MCF 10A (cell line): ENCODE measurements at regions of chr11 and their contacts with region 1.

Region 1: GRCh38 chr11:12087075-12088004 is 23.1 kb upstream of the MICAL2 start:
- DNase-seq: peak; percentile 70
- H3K4me3 Mint-ChIP-seq: peak overlapping the region; percentile 8
- H3K27ac Mint-ChIP-seq: peak overlapping the region; percentile 37
- H3K4me1 Mint-ChIP-seq: peaks cover 45% of the 10 kb centered on the region
- H3K27me3 Mint-ChIP-seq: no peaks in the 10 kb centered on the region
- CTCF ChIP-seq: peak; percentile 11

Region 2: DNA sequence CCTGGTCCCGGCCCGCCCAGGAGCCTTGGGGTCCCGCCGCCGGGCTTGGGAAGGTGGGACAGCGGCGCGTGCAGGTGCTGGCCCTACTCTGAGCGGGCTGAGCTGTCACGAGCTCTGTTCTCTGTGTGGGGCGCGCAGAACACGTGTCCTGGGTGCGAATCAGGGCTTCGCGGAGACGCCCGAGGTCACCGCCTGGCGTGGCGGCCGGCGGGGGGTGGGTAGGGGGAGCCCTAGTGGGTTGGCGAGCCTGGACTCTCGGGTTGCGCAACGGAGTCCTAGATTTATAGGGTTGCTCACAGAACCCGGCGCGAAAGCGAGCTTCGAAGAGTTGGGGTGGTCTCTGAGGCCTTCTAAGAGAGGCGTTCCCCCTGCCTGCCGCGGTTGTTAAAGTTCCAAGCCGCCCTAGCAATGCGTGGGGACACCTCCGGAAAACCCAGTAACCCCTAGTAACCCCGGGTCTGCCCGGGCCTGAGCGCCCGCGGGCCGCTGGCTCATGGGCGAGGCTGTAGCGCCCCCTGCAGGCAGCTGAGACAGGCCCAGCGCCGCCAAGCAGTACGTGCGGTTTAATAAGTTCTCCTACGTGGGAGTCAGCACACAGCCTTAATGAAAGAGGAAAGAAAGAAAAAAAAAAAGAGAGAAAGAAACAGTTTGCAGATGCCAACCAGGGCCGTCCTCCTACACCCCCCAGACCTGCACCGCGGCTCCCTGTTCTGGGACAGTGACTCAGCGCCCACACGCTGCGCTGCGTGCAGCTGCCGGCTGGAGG is 1779.7 kb before region 1 on chr11:
- CTCF ChIA-PET with region 1: no interaction called
- POLR2A ChIA-PET with region 1: no interaction called
- intact Hi-C with region 1: no loop called
- DNase-seq: peak; percentile 87
- H3K4me3 Mint-ChIP-seq: peak overlapping the region; percentile 79
- H3K27ac Mint-ChIP-seq: peak overlapping the region; percentile 87
- H3K4me1 Mint-ChIP-seq: peaks cover 45% of the 10 kb centered on the region
- H3K27me3 Mint-ChIP-seq: no peaks in the 10 kb centered on the region
- CTCF ChIP-seq: peak; percentile 99

Region 3: GRCh38 chr11:12019337-12019736 is 68.0 kb before region 1 on chr11:
- CTCF ChIA-PET with region 1: no interaction called
- POLR2A ChIA-PET with region 1: no interaction called
- intact Hi-C with region 1: no loop called
- DNase-seq: no peak
- H3K4me3 Mint-ChIP-seq: no peak overlapping the region
- H3K27ac Mint-ChIP-seq: no peak overlapping the region
- H3K4me1 Mint-ChIP-seq: peaks cover 14% of the 10 kb centered on the region
- H3K27me3 Mint-ChIP-seq: no peaks in the 10 kb centered on the region
- CTCF ChIP-seq: no peak

Region 4: GRCh38 chr11:12052676-12053605 is 34.4 kb before region 1 on chr11:
- CTCF ChIA-PET with region 1: interaction called, 61 read pairs
- POLR2A ChIA-PET with region 1: interaction called, 3 read pairs
- intact Hi-C with region 1: loop called (anchors 5 kb)
- DNase-seq: peak; percentile 60
- H3K4me3 Mint-ChIP-seq: no peak overlapping the region
- H3K27ac Mint-ChIP-seq: peak overlapping the region; percentile 10
- H3K4me1 Mint-ChIP-seq: peaks cover 30% of the 10 kb centered on the region
- H3K27me3 Mint-ChIP-seq: no peaks in the 10 kb centered on the region
- CTCF ChIP-seq: no peak

Region 5: DNA sequence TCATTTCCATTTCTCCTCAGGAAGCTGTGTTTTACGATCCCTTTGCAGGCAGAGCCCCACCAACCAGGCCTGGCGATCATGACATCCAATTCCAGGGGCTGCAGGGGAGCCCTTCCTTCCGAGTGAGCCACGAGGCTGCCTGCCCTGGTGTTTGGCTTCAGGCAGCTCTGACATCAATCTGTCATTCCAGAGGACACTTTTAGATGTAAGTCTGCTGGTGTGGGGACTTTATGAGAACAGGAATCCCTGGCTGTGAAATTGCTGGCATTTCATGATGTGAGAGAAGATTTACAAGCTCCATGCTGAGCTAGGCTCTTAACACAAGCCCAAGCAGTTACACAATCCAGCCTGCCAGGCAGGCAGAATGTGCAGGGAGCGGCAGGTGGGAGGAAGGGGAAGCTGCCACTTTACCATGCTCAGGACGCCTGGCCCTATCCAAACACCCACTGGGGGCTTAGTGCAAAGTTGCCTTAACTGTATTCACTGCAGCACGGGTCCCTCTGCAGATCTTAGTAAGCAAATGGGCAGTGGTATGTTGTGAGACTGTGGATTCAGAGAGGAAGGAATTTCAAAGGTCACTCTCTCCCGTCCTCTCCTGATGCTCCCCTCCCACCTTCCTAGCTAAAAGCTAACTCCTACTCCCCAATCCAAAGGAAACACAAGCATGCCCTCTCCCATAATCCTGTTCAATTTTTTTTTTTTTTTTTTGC is 20.4 kb before region 1 on chr11:
- CTCF ChIA-PET with region 1: interaction called, 55 read pairs
- POLR2A ChIA-PET with region 1: interaction called, 65 read pairs
- intact Hi-C with region 1: no loop called
- DNase-seq: peak; percentile 82
- H3K4me3 Mint-ChIP-seq: peak overlapping the region; percentile 49
- H3K27ac Mint-ChIP-seq: peak overlapping the region; percentile 95
- H3K4me1 Mint-ChIP-seq: peaks cover 53% of the 10 kb centered on the region
- H3K27me3 Mint-ChIP-seq: no peaks in the 10 kb centered on the region
- CTCF ChIP-seq: no peak

Region 6: GRCh38 chr11:12100841-12101242 is 13.5 kb after region 1 on chr11:
- CTCF ChIA-PET with region 1: interaction called, 27 read pairs
- POLR2A ChIA-PET with region 1: interaction called, 3 read pairs
- intact Hi-C with region 1: no loop called
- DNase-seq: no peak
- H3K4me3 Mint-ChIP-seq: no peak overlapping the region
- H3K27ac Mint-ChIP-seq: no peak overlapping the region
- H3K4me1 Mint-ChIP-seq: peaks cover 11% of the 10 kb centered on the region
- H3K27me3 Mint-ChIP-seq: no peaks in the 10 kb centered on the region
- CTCF ChIP-seq: no peak

Region 7: DNA sequence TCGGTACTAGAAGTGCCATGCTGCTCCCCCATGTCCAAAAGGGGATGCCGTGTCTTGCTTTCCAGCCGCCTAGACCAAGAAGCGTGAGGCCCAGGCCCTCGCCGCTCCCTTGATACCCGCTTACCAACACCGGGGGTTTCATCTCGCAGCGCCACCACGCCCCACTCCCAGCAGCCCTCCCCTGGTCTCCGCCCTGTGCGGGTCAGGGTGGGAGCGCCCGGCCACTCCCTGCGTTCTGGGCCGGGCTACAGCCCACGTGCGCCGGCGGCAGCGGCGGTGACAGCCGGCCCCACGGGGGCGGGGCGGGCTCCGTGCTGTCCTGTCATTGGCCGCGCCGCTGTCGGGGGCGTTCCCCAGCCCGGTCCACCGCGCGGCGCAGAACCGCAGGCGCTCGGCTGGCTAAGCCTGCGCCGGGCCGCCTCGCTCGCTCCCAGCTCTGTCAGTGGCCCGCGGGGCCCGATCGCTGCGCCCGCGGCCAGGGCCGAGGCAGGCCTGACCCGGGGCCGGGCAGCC is 22.9 kb after region 1 on chr11 and contains the start of gene MICAL2:
- CTCF ChIA-PET with region 1: interaction called, 6 read pairs
- POLR2A ChIA-PET with region 1: interaction called, 11 read pairs
- intact Hi-C with region 1: no loop called
- DNase-seq: peak; percentile 88
- H3K4me3 Mint-ChIP-seq: peak within 1 kb of the TSS; percentile 79
- H3K27ac Mint-ChIP-seq: peak within 1 kb of the TSS; percentile 61
- H3K4me1 Mint-ChIP-seq: peaks cover 29% of the 10 kb centered on the region
- H3K27me3 Mint-ChIP-seq: no peaks in the 10 kb centered on the region
- CTCF ChIP-seq: no peak
- total RNA-seq, gene MICAL2: 151 and 154 TPM in 2 replicates

Region 8: DNA sequence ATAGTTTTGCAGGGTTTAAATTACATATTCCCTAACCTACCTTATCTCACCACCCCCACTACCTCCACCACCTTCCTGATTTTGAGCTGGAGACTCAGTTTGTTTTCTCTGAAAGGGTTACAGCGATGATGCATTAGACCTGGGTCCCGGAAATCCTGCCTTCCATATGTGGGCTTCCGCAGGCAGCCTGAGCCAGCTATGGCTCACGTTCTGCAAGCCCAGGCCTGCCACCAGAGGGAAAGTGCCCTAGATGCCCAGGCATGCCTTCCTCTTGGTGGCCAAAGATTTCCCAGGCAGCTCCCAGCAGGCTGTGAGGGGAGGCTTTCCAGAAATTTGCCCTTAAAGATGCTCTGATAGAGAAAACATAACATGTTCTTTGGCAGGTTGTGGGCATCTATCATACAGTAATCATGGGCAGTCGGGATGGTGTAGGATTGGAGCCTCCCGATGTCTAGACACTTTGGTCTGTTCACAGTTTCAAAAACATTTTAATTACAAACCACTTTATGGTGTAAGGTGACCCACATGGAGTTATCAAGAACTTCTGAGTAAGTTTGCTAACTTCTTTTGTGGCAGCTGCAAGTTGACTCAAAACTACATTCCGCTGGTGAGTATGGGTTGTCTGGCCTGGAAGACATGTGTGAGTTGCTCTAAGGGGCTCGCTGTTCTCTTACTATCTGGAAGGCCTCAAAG is 102.3 kb after region 1 on chr11:
- CTCF ChIA-PET with region 1: interaction called, 10 read pairs
- POLR2A ChIA-PET with region 1: interaction called, 13 read pairs
- intact Hi-C with region 1: no loop called
- DNase-seq: peak; percentile 93
- H3K4me3 Mint-ChIP-seq: peak overlapping the region; percentile 28
- H3K27ac Mint-ChIP-seq: peak overlapping the region; percentile 85
- H3K4me1 Mint-ChIP-seq: peaks cover 38% of the 10 kb centered on the region
- H3K27me3 Mint-ChIP-seq: no peaks in the 10 kb centered on the region
- CTCF ChIP-seq: peak; percentile 30